ENCODE measurements at regions of chr6 and their contacts with region 1.

Region 1: GRCh38 chr6:52635049-52635577 is 35.8 kb upstream of the TMEM14A start:
- DNase-seq: peak; percentile 7
- ATAC-seq: peak; percentile 82
- H3K4me3 Mint-ChIP-seq: no peak overlapping the region
- H3K27ac Mint-ChIP-seq: peak overlapping the region; percentile 61
- H3K4me1 Mint-ChIP-seq: peaks cover 10% of the 10 kb centered on the region
- H3K27me3 Mint-ChIP-seq: peaks cover 6% of the 10 kb centered on the region
- CTCF ChIP-seq: no peak

Region 2: DNA sequence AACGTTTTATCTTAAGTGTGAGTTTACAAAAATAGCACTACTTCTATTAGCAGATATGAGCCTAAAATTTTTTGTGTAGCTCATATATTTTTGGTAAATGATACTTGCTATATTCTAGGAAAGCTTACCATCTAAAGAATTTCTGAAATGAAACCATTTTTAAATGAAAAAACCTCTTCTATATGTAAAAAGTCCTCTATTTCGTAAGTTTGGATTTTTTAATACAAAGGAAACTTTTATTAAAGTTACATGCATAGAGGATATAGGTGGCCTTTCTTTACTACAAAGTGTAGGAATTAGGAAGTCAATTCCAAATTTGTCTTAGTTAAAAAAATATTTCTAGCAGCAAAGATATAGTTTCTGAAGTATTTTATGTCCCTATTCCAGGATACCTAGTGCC is 196.2 kb before region 1 on chr6:
- CTCF ChIA-PET with region 1: no interaction called
- POLR2A ChIA-PET with region 1: no interaction called
- intact Hi-C with region 1: no loop called
- DNase-seq: no peak
- ATAC-seq: no peak
- H3K4me3 Mint-ChIP-seq: no peak overlapping the region
- H3K27ac Mint-ChIP-seq: no peak overlapping the region
- H3K4me1 Mint-ChIP-seq: no peaks in the 10 kb centered on the region
- H3K27me3 Mint-ChIP-seq: no peaks in the 10 kb centered on the region
- CTCF ChIP-seq: no peak

Region 3: GRCh38 chr6:52664186-52664990 is 29.3 kb after region 1 on chr6:
- CTCF ChIA-PET with region 1: interaction called, 10 read pairs
- POLR2A ChIA-PET with region 1: no interaction called
- intact Hi-C with region 1: no loop called
- DNase-seq: peak; percentile 86
- ATAC-seq: peak; percentile 97
- H3K4me3 Mint-ChIP-seq: no peak overlapping the region
- H3K27ac Mint-ChIP-seq: no peak overlapping the region
- H3K4me1 Mint-ChIP-seq: no peaks in the 10 kb centered on the region
- H3K27me3 Mint-ChIP-seq: no peaks in the 10 kb centered on the region
- CTCF ChIP-seq: no peak

Measured in activated CD8-positive, alpha-beta T cell treated with anti-CD3 and anti-CD28 coated beads for 36 hours (primary cell).